Caco-2 (cell line): ENCODE measurements at regions of chr18 and their contacts with region 1.

Region 1: DNA sequence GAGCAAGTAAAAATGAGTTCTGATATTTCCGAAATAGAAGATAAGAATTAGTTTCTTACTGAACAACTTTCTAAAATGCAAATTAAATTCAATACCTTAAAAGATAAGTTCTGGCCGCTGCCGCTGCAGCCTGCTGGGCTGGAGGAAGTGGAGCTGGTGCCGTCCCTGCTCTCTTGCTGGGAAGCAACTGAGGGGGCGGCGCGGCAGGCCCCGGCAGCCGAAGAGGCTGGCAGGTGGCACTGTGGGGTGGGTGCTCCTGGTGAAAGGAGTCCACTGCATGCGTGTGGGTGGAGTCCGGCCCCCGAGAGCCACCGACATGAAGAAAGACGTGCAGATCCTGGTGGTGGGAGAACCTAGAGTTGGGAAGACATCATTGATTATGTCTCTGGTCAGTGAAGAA is 89.5 kb upstream of the ZNF519 start:
- DNase-seq: no peak
- H3K4me3 ChIP-seq: no peak overlapping the region
- H3K4me3 Mint-ChIP-seq: no peak overlapping the region
- H3K27ac Mint-ChIP-seq: no peak overlapping the region
- H3K4me1 ChIP-seq: peaks cover 5% of the 10 kb centered on the region
- H3K4me1 Mint-ChIP-seq: peaks cover 13% of the 10 kb centered on the region
- H3K27me3 ChIP-seq: no peaks in the 10 kb centered on the region
- H3K27me3 Mint-ChIP-seq: no peaks in the 10 kb centered on the region
- CTCF ChIP-seq: no peak

Region 2: DNA sequence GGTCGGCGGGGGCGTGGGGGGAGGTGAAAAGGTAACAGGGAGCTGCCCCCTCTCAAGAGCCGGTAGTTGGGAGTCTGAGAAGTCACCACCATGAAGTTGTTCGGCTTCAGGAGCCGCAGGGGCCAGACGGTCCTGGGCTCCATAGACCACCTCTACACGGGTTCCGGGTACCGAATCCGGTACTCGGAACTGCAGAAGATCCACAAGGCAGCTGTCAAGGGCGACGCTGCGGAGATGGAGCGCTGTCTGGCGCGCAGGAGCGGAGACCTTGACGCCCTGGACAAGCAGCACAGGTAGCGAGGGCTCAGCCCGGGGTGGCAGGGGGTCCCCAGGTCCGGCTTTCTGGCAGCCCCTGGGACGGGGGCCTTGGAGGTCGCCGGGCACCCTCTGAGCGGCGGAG is 42.4 kb before region 1 on chr18:
- CTCF ChIA-PET with region 1: no interaction called
- POLR2A ChIA-PET with region 1: no interaction called
- intact Hi-C with region 1: loop called (anchors 5 kb)
- DNase-seq: peak in 1 of 2 experiments; percentile 31
- H3K4me3 ChIP-seq: peak overlapping the region; percentile 66
- H3K4me3 Mint-ChIP-seq: peak overlapping the region; percentile 83
- H3K27ac Mint-ChIP-seq: peak overlapping the region; percentile 61
- H3K4me1 ChIP-seq: no peaks in the 10 kb centered on the region
- H3K4me1 Mint-ChIP-seq: no peaks in the 10 kb centered on the region
- H3K27me3 ChIP-seq: no peaks in the 10 kb centered on the region
- H3K27me3 Mint-ChIP-seq: no peaks in the 10 kb centered on the region
- CTCF ChIP-seq: no peak